ENCODE measurements at regions of chr13 and their contacts with region 1.

Region 1: DNA sequence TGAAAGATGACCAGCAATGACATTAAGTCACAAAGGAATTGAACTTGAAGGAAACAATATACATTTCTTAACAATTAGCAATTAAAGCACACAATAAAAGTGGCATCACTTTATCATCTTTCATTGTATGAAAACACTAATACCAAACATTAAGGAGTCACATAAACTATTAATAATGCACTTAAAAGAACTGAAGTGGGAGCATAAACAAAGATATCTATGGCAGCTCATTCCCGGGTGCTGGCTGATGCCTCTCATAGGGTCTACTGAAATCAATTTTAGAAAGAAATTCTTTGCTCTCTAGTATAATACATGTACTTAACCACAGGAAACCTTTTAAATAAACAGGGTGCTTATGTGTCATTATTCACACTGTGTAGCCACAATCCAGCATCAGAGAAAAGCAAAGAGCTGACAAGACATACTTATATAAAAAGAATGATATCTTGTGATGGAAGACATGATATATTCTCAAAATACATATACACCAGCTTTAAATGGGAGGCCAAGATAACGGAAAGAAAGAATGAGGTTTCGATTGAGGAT is 1207.8 kb downstream of the EFNB2 start:
- DNase-seq: no peak
- ATAC-seq: no peak
- H3K4me3 ChIP-seq: no peak overlapping the region
- H3K4me3 Mint-ChIP-seq: no peak overlapping the region
- H3K27ac ChIP-seq: no peak overlapping the region
- H3K27ac Mint-ChIP-seq: no peak overlapping the region
- H3K4me1 ChIP-seq: peaks cover 0 to 2% of the 10 kb centered on the region in 2 experiments
- H3K4me1 Mint-ChIP-seq: no peaks in the 10 kb centered on the region
- H3K27me3 ChIP-seq: no peaks in the 10 kb centered on the region
- H3K27me3 Mint-ChIP-seq: no peaks in the 10 kb centered on the region

Region 2: GRCh38 chr13:105370011-105370650 is 42.5 kb after region 1 on chr13:
- CTCF ChIA-PET with region 1: no interaction called
- POLR2A ChIA-PET with region 1: interaction called in 1 of 2 experiments, 12 read pairs
- DNase-seq: no peak
- ATAC-seq: no peak
- H3K4me3 ChIP-seq: no peak overlapping the region
- H3K4me3 Mint-ChIP-seq: no peak overlapping the region
- H3K27ac ChIP-seq: no peak overlapping the region
- H3K27ac Mint-ChIP-seq: no peak overlapping the region
- H3K4me1 ChIP-seq: peaks cover 0 to 2% of the 10 kb centered on the region in 2 experiments
- H3K4me1 Mint-ChIP-seq: no peaks in the 10 kb centered on the region
- H3K27me3 ChIP-seq: no peaks in the 10 kb centered on the region
- H3K27me3 Mint-ChIP-seq: peaks cover 0 to 4% of the 10 kb centered on the region in 2 donors

Measured in T-cell (primary cell).